Mammary epithelial cell (primary cell): ENCODE measurements at regions of chr9 and their contacts with region 1.

Region 1: GRCh38 chr9:72364679-72365524 is at the start of gene ZFAND5:
- DNase-seq: peak; percentile 96
- H3K4me3 ChIP-seq: peak within 1 kb of the TSS; percentile 85 to 97 (median 87)
- H3K27ac ChIP-seq: peak within 1 kb of the TSS; percentile 95
- H3K4me1 ChIP-seq: peaks cover 19% of the 10 kb centered on the region
- H3K27me3 ChIP-seq: no peaks in the 10 kb centered on the region
- CTCF ChIP-seq: peak in 1 of 2 donors; percentile 32
- total RNA-seq, gene ZFAND5: 88.6 to 92.5 TPM

Region 2: GRCh38 chr9:72292256-72292682 is 72.6 kb before region 1 on chr9:
- CTCF ChIA-PET with region 1: no interaction called
- dilution Hi-C with region 1: no loop called
- in situ Hi-C with region 1: no loop called
- intact Hi-C with region 1: loop called (anchors 2 kb)
- DNase-seq: peak; percentile 27
- H3K4me3 ChIP-seq: no peak overlapping the region
- H3K27ac ChIP-seq: no peak overlapping the region
- H3K4me1 ChIP-seq: peaks cover 8% of the 10 kb centered on the region
- H3K27me3 ChIP-seq: no peaks in the 10 kb centered on the region
- CTCF ChIP-seq: peak; percentile 45 to 48

Region 3: DNA sequence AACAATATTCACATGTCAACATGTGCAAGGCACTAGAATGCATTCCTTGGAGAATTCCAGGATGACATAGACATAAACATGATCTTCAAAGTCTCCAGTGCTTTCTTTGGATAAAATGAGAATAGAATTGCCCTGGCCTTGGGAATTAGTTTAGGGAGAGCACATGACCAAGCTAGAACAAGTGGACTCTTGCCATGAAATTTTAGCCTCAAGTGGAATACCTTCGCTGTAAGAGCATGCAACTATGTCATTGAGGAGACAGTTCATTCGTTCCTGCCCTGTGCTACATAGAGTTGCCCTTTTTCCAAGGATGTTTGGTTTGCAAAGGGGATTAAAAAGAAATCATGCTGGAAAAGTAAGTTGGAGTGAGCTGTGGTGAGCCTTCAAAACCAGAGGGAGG is 42.6 kb before region 1 on chr9:
- CTCF ChIA-PET with region 1: no interaction called
- dilution Hi-C with region 1: no loop called
- in situ Hi-C with region 1: no loop called
- intact Hi-C with region 1: no loop called
- DNase-seq: no peak
- H3K4me3 ChIP-seq: no peak overlapping the region
- H3K27ac ChIP-seq: no peak overlapping the region
- H3K4me1 ChIP-seq: no peaks in the 10 kb centered on the region
- H3K27me3 ChIP-seq: no peaks in the 10 kb centered on the region
- CTCF ChIP-seq: no peak

Region 4: DNA sequence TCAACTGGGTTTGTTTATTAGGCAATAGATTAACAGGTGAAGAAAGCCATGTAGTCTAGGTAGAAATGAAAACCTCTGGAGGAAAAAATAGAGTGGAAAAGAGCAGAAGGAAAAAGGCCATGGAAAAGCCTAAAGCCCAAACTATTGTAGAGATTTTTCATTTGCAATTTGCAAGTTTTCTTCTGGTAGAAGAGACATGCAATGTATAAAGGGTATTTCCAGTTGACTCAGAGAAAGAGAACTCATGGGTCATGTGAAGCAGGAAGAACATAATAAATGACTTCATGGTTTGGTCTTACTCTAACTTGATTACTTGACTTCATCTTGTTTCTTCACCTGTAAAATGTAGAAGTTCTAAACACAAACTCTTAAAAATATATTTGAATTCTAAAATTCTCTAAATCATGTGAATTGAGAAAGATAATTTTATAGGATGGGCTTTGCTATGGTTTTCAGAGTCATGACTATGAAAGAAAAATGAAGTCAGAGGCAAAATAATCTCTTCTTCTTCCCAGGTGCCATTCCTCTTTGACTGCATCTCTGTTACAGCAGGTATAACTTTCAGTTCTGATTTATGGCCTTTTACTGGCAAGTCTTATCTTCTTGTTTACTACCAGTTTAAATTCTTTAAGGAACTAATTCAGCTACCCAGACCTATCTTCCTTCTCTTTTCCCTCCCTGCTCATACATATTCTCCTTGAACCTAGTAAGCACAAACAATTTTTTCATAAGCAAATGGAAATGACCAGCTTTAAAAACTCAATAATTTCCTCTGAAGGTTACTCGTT is 108.8 kb after region 1 on chr9:
- CTCF ChIA-PET with region 1: no interaction called
- dilution Hi-C with region 1: loop called (anchors 10 kb)
- in situ Hi-C with region 1: no loop called
- intact Hi-C with region 1: loop called (anchors 2 kb)
- DNase-seq: peak; percentile 73
- H3K4me3 ChIP-seq: no peak overlapping the region
- H3K27ac ChIP-seq: no peak overlapping the region
- H3K4me1 ChIP-seq: peaks cover 41% of the 10 kb centered on the region
- H3K27me3 ChIP-seq: no peaks in the 10 kb centered on the region
- CTCF ChIP-seq: no peak

Region 5: GRCh38 chr9:72540348-72540873 is 175.5 kb after region 1 on chr9:
- CTCF ChIA-PET with region 1: no interaction called
- dilution Hi-C with region 1: no loop called
- in situ Hi-C with region 1: no loop called
- intact Hi-C with region 1: loop called (anchors 1 kb)
- DNase-seq: peak; percentile 96
- H3K4me3 ChIP-seq: no peak overlapping the region
- H3K27ac ChIP-seq: peak overlapping the region; percentile 95
- H3K4me1 ChIP-seq: peaks cover 34% of the 10 kb centered on the region
- H3K27me3 ChIP-seq: no peaks in the 10 kb centered on the region
- CTCF ChIP-seq: no peak

Region 6: GRCh38 chr9:72586388-72587130 is 221.7 kb after region 1 on chr9:
- CTCF ChIA-PET with region 1: no interaction called
- dilution Hi-C with region 1: no loop called
- in situ Hi-C with region 1: loop called in 1 of 2 experiments (anchors 5 kb)
- intact Hi-C with region 1: loop called (anchors 2 kb)
- DNase-seq: peak; percentile 90
- H3K4me3 ChIP-seq: no peak overlapping the region
- H3K27ac ChIP-seq: peak overlapping the region; percentile 13
- H3K4me1 ChIP-seq: peaks cover 20% of the 10 kb centered on the region
- H3K27me3 ChIP-seq: no peaks in the 10 kb centered on the region
- CTCF ChIP-seq: peak; percentile 17 to 47

Region 7: DNA sequence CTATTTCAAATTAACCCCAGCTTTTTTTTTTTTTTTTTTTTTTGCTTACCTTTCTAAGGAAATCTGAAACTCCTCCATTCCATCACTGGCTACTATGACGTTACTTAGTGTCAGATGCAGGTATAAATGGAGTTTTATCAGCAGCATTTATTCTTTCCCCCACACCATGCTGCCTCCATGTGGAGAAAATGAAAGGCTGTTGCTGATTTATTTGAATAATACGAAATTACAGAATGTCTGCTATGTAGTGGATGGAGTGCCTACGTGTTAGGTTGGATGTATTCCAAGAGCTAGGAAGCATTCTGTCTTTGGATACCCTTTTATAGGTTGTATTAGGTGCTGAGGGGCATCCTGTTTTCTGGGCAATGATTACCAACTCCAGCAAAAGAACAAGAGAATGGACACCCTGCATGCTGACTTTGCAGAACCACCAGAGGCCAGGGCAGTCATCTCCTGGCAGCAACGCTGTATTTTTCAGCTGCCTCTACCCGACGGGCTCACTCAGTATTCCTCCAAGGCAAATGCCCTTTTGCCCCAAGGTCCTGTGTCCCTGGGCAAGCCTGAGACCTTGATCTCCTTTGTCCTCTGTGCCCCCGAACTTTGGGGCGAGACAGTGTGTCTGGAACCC is 388.5 kb after region 1 on chr9:
- CTCF ChIA-PET with region 1: no interaction called
- dilution Hi-C with region 1: no loop called
- in situ Hi-C with region 1: no loop called
- intact Hi-C with region 1: loop called (anchors 2 kb)
- DNase-seq: no peak
- H3K4me3 ChIP-seq: no peak overlapping the region
- H3K27ac ChIP-seq: no peak overlapping the region
- H3K4me1 ChIP-seq: no peaks in the 10 kb centered on the region
- H3K27me3 ChIP-seq: peaks cover 2% of the 10 kb centered on the region
- CTCF ChIP-seq: peak; percentile 48 to 62